ENCODE measurements at regions of chr15 and their contacts with region 1.

Region 1: GRCh38 chr15:58419803-58420524 is 11.8 kb upstream of the LIPC start:
- DNase-seq: no peak
- H3K4me3 ChIP-seq: no peak overlapping the region
- H3K27ac ChIP-seq: no peak overlapping the region
- H3K4me1 ChIP-seq: peaks cover 0 to under 1% (median 0%) of the 10 kb centered on the region in 4 donors
- H3K27me3 ChIP-seq: no peaks in the 10 kb centered on the region
- CTCF ChIP-seq: no peak
- EP300 ChIP-seq: no peak
- POLR2A ChIP-seq: no peak

Region 2: GRCh38 chr15:58438956-58439355 is 19.0 kb after region 1 on chr15:
- in situ Hi-C with region 1: no loop called
- intact Hi-C with region 1: loop called (anchors 1 kb)
- DNase-seq: peak; percentile 47
- H3K4me3 ChIP-seq: no peak overlapping the region
- H3K27ac ChIP-seq: peak overlapping the region in 2 of 4 donors; percentile 77 to 80
- H3K4me1 ChIP-seq: peaks cover 5 to 35% (median 21%) of the 10 kb centered on the region in 4 donors
- H3K27me3 ChIP-seq: no peaks in the 10 kb centered on the region
- CTCF ChIP-seq: peak; percentile 8 to 46 (median 29)
- EP300 ChIP-seq: no peak
- POLR2A ChIP-seq: no peak

Region 3: DNA sequence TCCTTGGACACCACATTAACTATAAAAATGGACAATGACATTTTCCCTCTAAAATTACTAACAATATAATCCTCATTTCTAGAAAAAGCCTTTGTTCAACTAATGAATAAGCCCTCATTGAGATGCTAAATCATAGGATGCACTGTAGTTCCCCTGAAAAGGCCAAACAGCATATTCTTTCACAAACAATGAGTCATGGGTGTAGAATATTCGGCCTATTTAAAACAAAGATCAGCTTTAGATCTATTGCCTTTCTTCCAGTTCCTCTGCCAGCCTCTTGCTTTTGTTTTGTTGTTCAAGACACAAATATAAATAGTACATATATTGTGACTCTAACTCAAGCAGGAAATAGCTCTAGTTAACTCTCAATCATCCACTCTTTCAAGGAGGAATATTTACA is 247.0 kb after region 1 on chr15:
- in situ Hi-C with region 1: no loop called
- intact Hi-C with region 1: no loop called
- DNase-seq: no peak
- H3K4me3 ChIP-seq: no peak overlapping the region
- H3K27ac ChIP-seq: no peak overlapping the region
- H3K4me1 ChIP-seq: peaks cover 0 to 11% (median 3%) of the 10 kb centered on the region in 4 donors
- H3K27me3 ChIP-seq: no peaks in the 10 kb centered on the region
- CTCF ChIP-seq: no peak
- EP300 ChIP-seq: no peak
- POLR2A ChIP-seq: no peak